Naive thymus-derived CD4-positive, alpha-beta T cell (primary cell): ENCODE measurements at regions of chr9 and their contacts with region 1.

Region 1: GRCh38 chr9:131178382-131178781 is 53.0 kb downstream of the NUP214 start:
- DNase-seq: peak; percentile 49 to 83 (median 74)
- ATAC-seq: peak; percentile 100
- H3K4me3 ChIP-seq: no peak overlapping the region
- H3K4me3 Mint-ChIP-seq: no peak overlapping the region
- H3K27ac ChIP-seq: no peak overlapping the region
- H3K27ac Mint-ChIP-seq: peak overlapping the region in 6 of 9 donors; percentile 25 to 73 (median 40)
- H3K4me1 ChIP-seq: peaks cover 0 to 5% of the 10 kb centered on the region in 2 donors
- H3K4me1 Mint-ChIP-seq: peaks cover 5 to 24% (median 10%) of the 10 kb centered on the region in 7 donors
- H3K27me3 ChIP-seq: no peaks in the 10 kb centered on the region
- H3K27me3 Mint-ChIP-seq: no peaks in the 10 kb centered on the region

Region 2: DNA sequence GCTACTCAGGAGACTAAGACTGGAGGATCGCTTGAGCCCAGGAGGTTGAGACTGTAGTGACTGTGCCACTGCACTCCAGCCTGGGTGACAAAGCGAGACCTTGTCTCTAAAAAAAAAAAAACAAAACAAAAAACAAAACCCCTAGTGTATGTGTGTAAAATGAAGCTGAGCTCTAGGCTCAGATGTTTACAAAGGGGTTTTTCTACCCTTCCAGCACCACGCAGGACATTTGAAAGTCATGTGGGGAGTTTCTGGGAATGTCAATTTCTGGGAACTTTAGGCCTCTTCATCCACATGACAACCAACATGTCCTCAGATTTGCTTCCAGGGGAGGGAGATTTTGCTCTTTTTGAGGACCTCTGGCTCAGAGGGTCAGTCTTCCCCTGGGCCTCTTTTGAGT is 124.5 kb before region 1 on chr9:
- CTCF ChIA-PET with region 1: interaction called, 3 read pairs
- POLR2A ChIA-PET with region 1: no interaction called
- intact Hi-C with region 1: loop called (anchors 1 to 5 kb)
- DNase-seq: no peak
- ATAC-seq: no peak
- H3K4me3 ChIP-seq: no peak overlapping the region
- H3K4me3 Mint-ChIP-seq: no peak overlapping the region
- H3K27ac ChIP-seq: no peak overlapping the region
- H3K27ac Mint-ChIP-seq: no peak overlapping the region
- H3K4me1 ChIP-seq: no peaks in the 10 kb centered on the region
- H3K4me1 Mint-ChIP-seq: no peaks in the 10 kb centered on the region
- H3K27me3 ChIP-seq: no peaks in the 10 kb centered on the region
- H3K27me3 Mint-ChIP-seq: no peaks in the 10 kb centered on the region

Region 3: GRCh38 chr9:131237931-131238401 is 59.6 kb after region 1 on chr9:
- CTCF ChIA-PET with region 1: interaction called, 4 read pairs
- POLR2A ChIA-PET with region 1: no interaction called
- intact Hi-C with region 1: loop called (anchors 5 kb)
- DNase-seq: peak; percentile 59 to 89 (median 84)
- ATAC-seq: peak; percentile 94
- H3K4me3 ChIP-seq: peak overlapping the region; percentile 18
- H3K4me3 Mint-ChIP-seq: peak overlapping the region; percentile 79 to 89 (median 82)
- H3K27ac ChIP-seq: peak overlapping the region; percentile 69
- H3K27ac Mint-ChIP-seq: peak overlapping the region; percentile 88 to 97 (median 96)
- H3K4me1 ChIP-seq: peaks cover 42 to 43% of the 10 kb centered on the region in 2 donors
- H3K4me1 Mint-ChIP-seq: peaks cover 29 to 61% (median 48%) of the 10 kb centered on the region in 7 donors
- H3K27me3 ChIP-seq: no peaks in the 10 kb centered on the region
- H3K27me3 Mint-ChIP-seq: no peaks in the 10 kb centered on the region

Region 4: DNA sequence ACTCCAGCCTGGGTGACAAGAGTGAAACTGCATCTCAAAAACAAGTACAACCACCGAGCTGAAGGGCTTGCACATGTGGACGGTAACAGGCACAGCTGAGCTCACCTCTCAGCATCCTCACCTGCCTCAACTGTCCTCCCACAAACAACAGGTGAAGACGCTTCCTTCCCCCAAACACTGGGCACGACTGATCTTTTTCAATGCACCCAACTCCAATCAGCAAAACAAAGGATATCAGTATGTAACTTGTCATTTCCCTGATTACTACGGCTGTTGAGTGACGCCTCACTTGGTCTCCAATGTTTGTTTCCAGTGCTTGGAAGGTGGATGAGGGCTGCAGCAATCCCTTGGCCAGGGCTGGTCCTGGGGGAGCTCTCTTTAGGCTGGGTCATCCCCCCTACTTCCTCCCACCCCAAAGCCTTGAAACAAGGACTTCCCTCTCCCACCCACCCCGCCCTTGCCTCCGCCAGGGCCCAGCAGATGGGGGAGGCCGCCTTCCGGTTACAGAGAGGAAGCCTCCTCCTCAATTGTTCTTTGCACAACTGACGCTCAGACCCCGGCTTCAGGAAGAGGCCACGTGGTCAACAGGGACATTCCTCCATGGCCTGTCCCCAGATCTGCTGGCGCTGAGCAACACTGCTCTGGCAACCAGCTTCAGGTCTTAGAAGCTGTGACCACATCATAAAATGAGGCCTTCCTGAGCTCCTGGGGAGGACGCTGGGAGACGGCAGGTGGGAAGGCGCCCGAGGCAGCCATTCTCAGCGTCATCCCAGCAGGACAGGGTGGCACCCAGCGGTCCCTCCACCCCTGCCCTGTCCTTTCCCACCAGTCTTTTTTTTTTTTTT is 92.0 kb after region 1 on chr9:
- CTCF ChIA-PET with region 1: interaction called, 3 read pairs
- POLR2A ChIA-PET with region 1: interaction called, 3 read pairs
- intact Hi-C with region 1: loop called in 1 of 2 experiments (anchors 1 kb)
- DNase-seq: peak in 8 of 9 donors; percentile 49 to 70 (median 64)
- ATAC-seq: peak; percentile 16
- H3K4me3 ChIP-seq: peak overlapping the region; percentile 74
- H3K4me3 Mint-ChIP-seq: peak overlapping the region; percentile 83 to 100 (median 92)
- H3K27ac ChIP-seq: peak overlapping the region; percentile 96
- H3K27ac Mint-ChIP-seq: peak overlapping the region; percentile 95 to 100 (median 99)
- H3K4me1 ChIP-seq: peaks cover 50 to 63% of the 10 kb centered on the region in 2 donors
- H3K4me1 Mint-ChIP-seq: peaks cover 30 to 61% (median 50%) of the 10 kb centered on the region in 7 donors
- H3K27me3 ChIP-seq: no peaks in the 10 kb centered on the region
- H3K27me3 Mint-ChIP-seq: no peaks in the 10 kb centered on the region

Region 5: GRCh38 chr9:131277910-131278701 is 99.7 kb after region 1 on chr9:
- CTCF ChIA-PET with region 1: interaction called, 3 read pairs
- POLR2A ChIA-PET with region 1: interaction called, 3 read pairs
- intact Hi-C with region 1: loop called (anchors 1 kb)
- DNase-seq: peak in 8 of 9 donors; percentile 47 to 77 (median 62)
- ATAC-seq: peak; percentile 67
- H3K4me3 ChIP-seq: peak overlapping the region; percentile 55
- H3K4me3 Mint-ChIP-seq: peak overlapping the region; percentile 83 to 97 (median 88)
- H3K27ac ChIP-seq: peak overlapping the region; percentile 96
- H3K27ac Mint-ChIP-seq: peak overlapping the region; percentile 84 to 95 (median 91)
- H3K4me1 ChIP-seq: peaks cover 21 to 23% of the 10 kb centered on the region in 2 donors
- H3K4me1 Mint-ChIP-seq: peaks cover 17 to 34% (median 27%) of the 10 kb centered on the region in 7 donors
- H3K27me3 ChIP-seq: no peaks in the 10 kb centered on the region
- H3K27me3 Mint-ChIP-seq: peaks cover 0 to 18% (median 0%) of the 10 kb centered on the region in 5 donors

Region 6: DNA sequence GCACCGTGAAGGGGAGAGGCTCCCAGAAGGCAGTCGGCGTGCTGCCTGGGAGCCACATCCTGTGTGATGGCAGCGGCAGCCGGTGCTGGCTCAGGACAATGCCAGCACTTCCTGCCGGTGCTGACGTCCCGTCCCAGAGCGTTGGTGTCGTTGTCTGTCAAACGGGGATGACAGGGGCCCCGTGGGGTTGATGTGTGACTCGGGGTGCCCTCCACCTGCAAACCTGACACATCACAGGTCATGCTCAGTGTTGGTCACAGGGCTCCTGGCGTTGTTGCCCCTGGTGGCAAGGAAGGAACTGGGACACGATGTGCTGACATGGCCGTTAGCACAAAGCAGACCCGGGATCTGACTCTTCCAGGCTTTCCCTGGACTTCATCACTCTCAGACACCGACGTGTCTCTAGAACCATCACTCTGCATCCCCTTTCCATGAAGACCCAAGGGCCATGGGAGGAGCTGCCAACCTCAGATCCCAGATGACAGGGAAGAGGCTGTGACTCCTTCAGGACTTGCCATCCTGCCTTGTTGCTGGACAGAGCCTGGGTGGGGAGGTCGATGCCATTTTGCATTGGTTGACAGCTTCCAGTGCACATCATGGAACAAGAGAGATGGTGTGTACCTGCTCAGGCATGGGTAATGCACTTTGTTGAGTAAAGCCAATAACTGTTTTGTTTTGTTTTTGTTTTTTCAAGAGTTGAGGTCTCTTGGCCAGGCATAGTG is 132.6 kb after region 1 on chr9:
- CTCF ChIA-PET with region 1: no interaction called
- POLR2A ChIA-PET with region 1: interaction called, 3 read pairs
- intact Hi-C with region 1: loop called in 1 of 2 experiments (anchors 1 kb)
- DNase-seq: peak; percentile 41 to 79 (median 74)
- ATAC-seq: peak; percentile 92
- H3K4me3 ChIP-seq: peak overlapping the region; percentile 39
- H3K4me3 Mint-ChIP-seq: peak overlapping the region; percentile 49 to 78 (median 70)
- H3K27ac ChIP-seq: peak overlapping the region; percentile 43
- H3K27ac Mint-ChIP-seq: peak overlapping the region; percentile 63 to 92 (median 80)
- H3K4me1 ChIP-seq: peaks cover 13 to 14% of the 10 kb centered on the region in 2 donors
- H3K4me1 Mint-ChIP-seq: peaks cover 0 to 19% (median 15%) of the 10 kb centered on the region in 7 donors
- H3K27me3 ChIP-seq: no peaks in the 10 kb centered on the region
- H3K27me3 Mint-ChIP-seq: no peaks in the 10 kb centered on the region

Region 7: DNA sequence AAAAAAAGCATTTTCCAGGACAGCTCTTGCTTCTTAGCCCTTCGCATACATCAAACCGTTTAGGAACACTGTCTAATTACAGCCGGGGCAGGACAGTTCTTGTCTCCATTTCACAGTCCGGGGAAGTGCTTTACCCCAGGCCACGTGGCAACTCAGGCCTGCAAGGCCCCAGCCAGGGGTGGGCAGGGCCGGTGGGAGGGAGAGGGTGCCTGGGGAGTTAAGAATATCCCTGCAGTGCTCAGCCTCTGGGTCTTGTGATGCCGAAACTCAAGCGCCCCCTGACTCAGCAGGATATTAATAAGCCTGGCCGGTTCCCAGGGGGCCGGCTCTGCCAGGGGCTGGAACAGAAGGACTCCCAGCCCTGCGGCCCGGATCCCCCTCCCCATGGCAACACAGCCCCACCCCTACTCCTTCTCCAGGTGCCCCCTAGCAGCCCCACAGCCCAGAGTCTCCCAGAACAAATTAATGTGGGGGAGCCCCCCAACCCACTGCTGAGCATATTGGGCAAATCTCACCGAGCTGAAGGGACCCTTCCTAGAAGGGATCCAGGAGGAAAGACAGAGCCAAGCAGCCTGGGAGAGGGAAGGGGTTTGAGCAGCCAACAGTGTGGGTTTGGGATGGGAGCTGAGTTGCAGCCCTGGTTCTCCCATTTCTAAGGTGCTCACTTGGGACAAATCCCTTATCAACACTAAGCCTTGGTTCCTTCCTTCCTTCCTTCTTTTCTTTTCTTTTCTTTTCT is 156.4 kb after region 1 on chr9:
- CTCF ChIA-PET with region 1: interaction called, 147 read pairs
- POLR2A ChIA-PET with region 1: interaction called, 3 read pairs
- intact Hi-C with region 1: loop called (anchors 1 kb)
- DNase-seq: no peak
- ATAC-seq: no peak
- H3K4me3 ChIP-seq: no peak overlapping the region
- H3K4me3 Mint-ChIP-seq: no peak overlapping the region
- H3K27ac ChIP-seq: no peak overlapping the region
- H3K27ac Mint-ChIP-seq: no peak overlapping the region
- H3K4me1 ChIP-seq: peaks cover 0 to 3% of the 10 kb centered on the region in 2 donors
- H3K4me1 Mint-ChIP-seq: peaks cover 4 to 7% (median 4%) of the 10 kb centered on the region in 7 donors
- H3K27me3 ChIP-seq: no peaks in the 10 kb centered on the region
- H3K27me3 Mint-ChIP-seq: peaks cover 0 to 5% (median 0%) of the 10 kb centered on the region in 5 donors